ENCODE measurements at regions of chr6 and their contacts with region 1.

Region 1: GRCh38 chr6:52512199-52512598 is 64.7 kb downstream of the TRAM2 start:
- DNase-seq: peak; percentile 92
- H3K4me3 ChIP-seq: no peak overlapping the region
- H3K27ac ChIP-seq: peak overlapping the region; percentile 89
- H3K4me1 ChIP-seq: peaks cover 64% of the 10 kb centered on the region
- H3K27me3 ChIP-seq: no peaks in the 10 kb centered on the region
- CTCF ChIP-seq: no peak
- POLR2A ChIP-seq: no peak

Region 2: GRCh38 chr6:52537001-52537753 is 25.0 kb after region 1 on chr6:
- CTCF ChIA-PET with region 1: interaction called, 6 read pairs
- POLR2A ChIA-PET with region 1: no interaction called
- dilution Hi-C with region 1: no loop called
- intact Hi-C with region 1: loop called (anchors 1 kb)
- DNase-seq: peak; percentile 78
- H3K4me3 ChIP-seq: no peak overlapping the region
- H3K27ac ChIP-seq: peak overlapping the region; percentile 74
- H3K4me1 ChIP-seq: peaks cover 83% of the 10 kb centered on the region
- H3K27me3 ChIP-seq: no peaks in the 10 kb centered on the region
- CTCF ChIP-seq: no peak
- POLR2A ChIP-seq: peak; percentile 9

Measured in endothelial cell of umbilical vein (primary cell).